OCI-LY7 (cell line): ENCODE measurements at regions of chr11 and their contacts with region 1.

Region 1: DNA sequence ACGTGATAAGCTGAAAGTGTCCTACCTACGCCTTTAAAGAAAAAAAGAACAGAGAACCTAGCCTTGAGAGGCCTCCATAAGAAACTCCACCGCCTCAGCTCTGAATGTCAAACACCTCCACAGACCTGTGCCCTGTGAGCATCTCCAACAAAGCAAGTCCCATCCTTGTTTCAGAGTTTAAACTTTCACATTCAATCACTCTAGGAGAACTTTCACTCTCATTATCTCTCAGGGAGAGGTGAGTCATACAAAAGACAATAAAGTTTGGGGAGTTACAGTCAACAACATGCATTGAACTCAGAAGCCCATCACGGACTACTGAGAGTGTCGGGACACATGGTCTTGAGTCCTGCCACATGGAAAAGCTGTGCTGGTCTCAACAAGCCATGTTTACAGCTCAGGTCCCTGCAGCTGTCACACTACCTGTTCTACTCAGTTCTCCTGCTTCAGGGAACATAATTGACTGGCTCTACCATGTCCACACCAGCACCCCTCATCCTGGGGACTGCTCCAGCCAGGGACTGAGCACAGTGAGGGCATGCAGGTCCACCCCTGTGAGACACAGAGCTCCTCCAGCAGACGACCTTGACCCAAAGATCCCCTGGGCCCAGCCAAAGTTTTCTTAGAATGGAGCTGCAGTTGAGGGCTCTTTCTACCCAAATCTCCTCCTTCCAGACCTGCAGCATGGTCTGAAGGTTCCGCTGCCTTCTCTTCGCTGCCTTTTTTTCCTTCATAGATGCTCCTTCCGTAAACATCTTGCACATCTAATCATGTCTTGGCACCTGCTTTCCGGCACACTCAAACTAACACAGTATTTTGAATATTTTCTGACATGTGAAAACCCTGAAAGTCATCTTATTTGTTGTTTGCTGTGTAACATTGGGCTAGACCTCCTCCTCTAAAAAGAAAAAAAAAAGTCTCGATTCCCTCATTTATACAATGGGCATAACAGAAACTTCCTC is 114.9 kb downstream of the ETS1 start:
- DNase-seq: peak; percentile 61
- H3K4me3 ChIP-seq: peak overlapping the region; percentile 51
- H3K27ac ChIP-seq: peak overlapping the region; percentile 98
- H3K4me1 ChIP-seq: peaks cover 100% of the 10 kb centered on the region
- CTCF ChIP-seq: no peak

Region 2: DNA sequence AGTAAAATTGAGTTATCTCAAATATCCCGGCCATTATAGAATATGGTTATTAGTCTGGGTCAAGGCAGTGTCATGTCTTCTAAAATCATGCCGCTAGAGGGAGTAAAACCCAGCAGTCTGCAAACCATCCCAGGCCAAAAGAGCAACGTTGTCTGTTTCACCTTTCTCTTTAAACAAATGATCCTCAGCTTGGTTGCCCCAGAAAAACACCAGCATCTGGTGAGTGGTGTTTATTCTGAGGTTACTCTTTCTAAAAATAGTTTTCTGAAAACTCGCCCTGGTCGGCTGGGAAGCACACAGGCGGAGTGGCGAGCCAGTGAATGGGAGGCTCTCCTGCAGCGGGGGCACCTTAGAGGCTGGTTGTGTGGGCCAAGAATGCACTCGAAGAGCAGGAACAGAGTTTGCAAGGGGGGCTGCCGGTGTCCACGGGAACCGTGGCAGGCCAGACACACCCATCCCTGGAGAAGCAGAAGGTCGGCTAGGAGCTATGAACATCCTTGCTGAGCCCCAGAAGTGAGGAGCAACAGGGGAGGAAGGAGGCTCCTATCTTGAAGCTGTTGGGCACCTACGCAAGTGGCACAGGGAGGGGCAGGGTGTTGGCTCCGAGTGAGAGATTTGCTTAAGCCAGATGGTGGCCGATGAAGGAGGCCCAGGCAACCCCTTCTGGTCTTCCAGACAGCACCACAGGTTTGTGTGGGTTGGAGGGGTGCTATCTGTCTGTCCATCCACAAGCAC is 182.1 kb before region 1 on chr11:
- CTCF ChIA-PET with region 1: no interaction called
- POLR2A ChIA-PET with region 1: interaction called, 3 read pairs
- intact Hi-C with region 1: loop called (anchors 1 kb)
- DNase-seq: peak; percentile 92
- H3K4me3 ChIP-seq: peak overlapping the region; percentile 43
- H3K27ac ChIP-seq: peak overlapping the region; percentile 63
- H3K4me1 ChIP-seq: peaks cover 35% of the 10 kb centered on the region
- CTCF ChIP-seq: peak; percentile 99

Region 3: DNA sequence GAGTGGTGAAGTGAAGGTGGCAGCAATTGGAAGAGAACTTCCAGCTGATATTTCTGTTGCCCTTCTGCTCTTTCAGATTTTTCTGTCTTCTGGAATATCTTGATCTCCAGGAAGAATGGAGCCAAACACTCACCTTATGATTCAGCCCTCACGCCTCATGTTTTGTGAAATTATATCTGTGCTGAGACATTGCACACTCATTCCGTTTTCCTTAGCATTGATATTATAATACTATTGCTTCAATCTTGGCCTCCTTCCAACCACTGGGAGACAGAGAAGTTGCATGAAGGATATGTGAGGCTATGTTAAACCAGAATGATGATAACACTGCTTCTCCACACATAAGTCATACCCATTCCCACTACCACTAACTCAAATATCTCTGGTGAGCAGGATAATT is 62.9 kb before region 1 on chr11:
- CTCF ChIA-PET with region 1: no interaction called
- POLR2A ChIA-PET with region 1: no interaction called
- intact Hi-C with region 1: no loop called
- DNase-seq: no peak
- H3K4me3 ChIP-seq: no peak overlapping the region
- H3K27ac ChIP-seq: no peak overlapping the region
- H3K4me1 ChIP-seq: peaks cover 5% of the 10 kb centered on the region
- CTCF ChIP-seq: no peak

Region 4: GRCh38 chr11:128610721-128611617 is 138.6 kb after region 1 on chr11:
- CTCF ChIA-PET with region 1: interaction called, 5 read pairs
- POLR2A ChIA-PET with region 1: interaction called, 30 read pairs
- intact Hi-C with region 1: loop called (anchors 1 kb)
- DNase-seq: peak; percentile 98
- H3K4me3 ChIP-seq: peak overlapping the region; percentile 45
- H3K27ac ChIP-seq: peak overlapping the region; percentile 99
- H3K4me1 ChIP-seq: peaks cover 93% of the 10 kb centered on the region
- CTCF ChIP-seq: no peak

Region 5: GRCh38 chr11:128624269-128625175 is 152.1 kb after region 1 on chr11:
- CTCF ChIA-PET with region 1: interaction called, 3 read pairs
- POLR2A ChIA-PET with region 1: interaction called, 44 read pairs
- intact Hi-C with region 1: loop called (anchors 1 kb)
- DNase-seq: peak; percentile 90
- H3K4me3 ChIP-seq: peak overlapping the region; percentile 46
- H3K27ac ChIP-seq: peak overlapping the region; percentile 97
- H3K4me1 ChIP-seq: peaks cover 100% of the 10 kb centered on the region
- CTCF ChIP-seq: no peak

Region 6: GRCh38 chr11:128653801-128654231 is 181.4 kb after region 1 on chr11:
- CTCF ChIA-PET with region 1: no interaction called
- POLR2A ChIA-PET with region 1: no interaction called
- intact Hi-C with region 1: no loop called
- DNase-seq: no peak
- H3K4me3 ChIP-seq: no peak overlapping the region
- H3K27ac ChIP-seq: no peak overlapping the region
- H3K4me1 ChIP-seq: peaks cover 7% of the 10 kb centered on the region
- CTCF ChIP-seq: no peak

Region 7: DNA sequence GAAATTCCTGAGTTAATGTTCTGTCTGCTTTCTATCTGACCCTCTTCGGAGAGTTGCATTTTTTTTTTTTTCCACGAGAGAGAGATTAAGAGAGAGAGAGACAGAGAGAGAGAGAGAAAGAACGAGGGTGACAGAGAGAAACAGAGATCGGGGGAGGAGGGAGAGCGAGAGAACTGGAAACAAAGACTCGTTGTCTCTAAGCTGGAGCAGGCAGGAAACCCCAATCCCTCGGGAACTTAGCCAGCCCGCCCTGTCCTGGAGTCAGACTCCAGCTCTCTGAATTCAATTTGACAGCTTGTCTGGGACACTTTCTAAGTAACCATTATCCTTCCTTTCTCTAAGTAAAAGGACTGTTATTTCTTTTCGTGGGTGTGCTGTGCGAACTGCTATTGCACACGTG is 317.8 kb after region 1 on chr11:
- CTCF ChIA-PET with region 1: no interaction called
- POLR2A ChIA-PET with region 1: no interaction called
- intact Hi-C with region 1: no loop called
- DNase-seq: no peak
- H3K4me3 ChIP-seq: no peak overlapping the region
- H3K27ac ChIP-seq: no peak overlapping the region
- H3K4me1 ChIP-seq: no peaks in the 10 kb centered on the region
- CTCF ChIP-seq: no peak

Region 8: GRCh38 chr11:128841461-128842072 is 369.2 kb after region 1 on chr11:
- CTCF ChIA-PET with region 1: no interaction called
- POLR2A ChIA-PET with region 1: interaction called, 4 read pairs
- intact Hi-C with region 1: loop called (anchors 5 kb)
- DNase-seq: peak; percentile 84
- H3K4me3 ChIP-seq: peak overlapping the region; percentile 37
- H3K27ac ChIP-seq: peak overlapping the region; percentile 96
- H3K4me1 ChIP-seq: peaks cover 85% of the 10 kb centered on the region
- CTCF ChIP-seq: no peak

Region 9: GRCh38 chr11:130159657-130160497 is 1687.5 kb after region 1 on chr11 and contains the start of gene ST14:
- CTCF ChIA-PET with region 1: no interaction called
- POLR2A ChIA-PET with region 1: no interaction called
- intact Hi-C with region 1: loop called (anchors 5 kb)
- DNase-seq: peak; percentile 70
- H3K4me3 ChIP-seq: peak within 1 kb of the TSS; percentile 74
- H3K27ac ChIP-seq: peak within 1 kb of the TSS; percentile 93
- H3K4me1 ChIP-seq: peaks cover 76% of the 10 kb centered on the region
- CTCF ChIP-seq: no peak; the same call in 1 of the 2 replicates
- total RNA-seq, gene ST14: 110 and 135 TPM in 2 replicates